BJ (cell line): ENCODE measurements at regions of chr6 and their contacts with region 1.

Region 1: GRCh38 chr6:35522660-35523658 is 10.3 kb upstream of the TULP1 start:
- DNase-seq: no peak
- H3K4me3 ChIP-seq: 0 out of 2 replicates have a peak overlapping the region, but pooled peaks have one; percentile 4
- H3K27me3 ChIP-seq: peaks cover 6% of the 10 kb centered on the region
- CTCF ChIP-seq: peak; percentile 99

Region 2: GRCh38 chr6:35461244-35461643 is 61.7 kb before region 1 on chr6:
- CTCF ChIA-PET with region 1: no interaction called
- POLR2A ChIA-PET with region 1: no interaction called
- DNase-seq: no peak
- H3K4me3 ChIP-seq: no peak overlapping the region
- H3K27me3 ChIP-seq: no peaks in the 10 kb centered on the region
- CTCF ChIP-seq: no peak

Region 3: DNA sequence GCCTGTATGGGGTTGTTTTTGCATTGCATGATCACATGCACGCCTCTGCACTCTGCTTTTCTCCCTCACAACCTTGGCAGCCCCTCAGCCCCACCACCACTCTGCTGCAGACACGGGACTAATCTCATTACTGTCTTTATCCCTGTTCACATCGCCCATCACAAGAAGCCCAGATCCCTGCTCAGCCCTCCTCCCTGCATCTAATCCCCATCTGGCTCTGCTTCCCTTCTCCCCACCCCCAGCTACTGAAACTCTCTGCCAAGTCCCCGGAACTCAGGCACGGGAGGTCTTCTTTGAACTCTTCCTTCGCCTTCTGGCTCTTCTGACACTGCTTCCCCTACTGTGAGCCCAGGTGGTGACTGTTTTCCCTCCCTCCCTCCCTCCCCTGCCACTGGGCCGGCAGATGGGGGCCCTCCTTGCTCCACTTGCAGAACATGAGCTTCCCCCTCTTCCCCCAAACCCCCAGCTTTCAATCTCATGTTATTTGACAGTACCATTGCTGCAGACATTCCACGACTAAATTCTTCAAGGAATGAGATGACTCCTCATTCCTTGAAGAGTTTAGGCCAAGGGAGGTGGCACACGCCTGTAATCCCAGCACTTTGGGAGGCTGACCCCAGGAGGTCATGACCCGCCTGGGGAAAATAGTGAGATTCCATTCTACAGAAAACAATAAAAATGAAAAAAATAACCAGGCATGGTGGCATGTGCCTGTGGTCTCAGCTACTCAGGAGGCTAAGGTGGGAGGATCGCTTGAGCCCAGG is 11.6 kb after region 1 on chr6:
- CTCF ChIA-PET with region 1: interaction called, 21 read pairs
- POLR2A ChIA-PET with region 1: no interaction called
- DNase-seq: no peak
- H3K4me3 ChIP-seq: no peak overlapping the region
- H3K27me3 ChIP-seq: peaks cover 7% of the 10 kb centered on the region
- CTCF ChIP-seq: no peak

Region 4: GRCh38 chr6:35552285-35552917 is 29.4 kb after region 1 on chr6:
- CTCF ChIA-PET with region 1: interaction called, 21 read pairs
- POLR2A ChIA-PET with region 1: no interaction called
- DNase-seq: no peak
- H3K4me3 ChIP-seq: no peak overlapping the region
- H3K27me3 ChIP-seq: peaks cover 2% of the 10 kb centered on the region
- CTCF ChIP-seq: peak; percentile 89